Motor neuron (in vitro differentiated cells): ENCODE measurements at regions of chr5 and their contacts with region 1.

Region 1: GRCh38 chr5:113513384-113514288 is at the start of gene YTHDC2:
- ATAC-seq: peak; percentile 93 to 98 (median 96)
- H3K4me3 ChIP-seq: peak within 1 kb of the TSS; percentile 60 to 81 (median 68)
- H3K27ac ChIP-seq: peak within 1 kb of the TSS; percentile 89 to 91
- H3K4me1 ChIP-seq: peaks cover 2 to 15% of the 10 kb centered on the region in 2 donors
- total RNA-seq, gene YTHDC2: 16.8 to 46.2 (median 21.8) TPM

Region 2: DNA sequence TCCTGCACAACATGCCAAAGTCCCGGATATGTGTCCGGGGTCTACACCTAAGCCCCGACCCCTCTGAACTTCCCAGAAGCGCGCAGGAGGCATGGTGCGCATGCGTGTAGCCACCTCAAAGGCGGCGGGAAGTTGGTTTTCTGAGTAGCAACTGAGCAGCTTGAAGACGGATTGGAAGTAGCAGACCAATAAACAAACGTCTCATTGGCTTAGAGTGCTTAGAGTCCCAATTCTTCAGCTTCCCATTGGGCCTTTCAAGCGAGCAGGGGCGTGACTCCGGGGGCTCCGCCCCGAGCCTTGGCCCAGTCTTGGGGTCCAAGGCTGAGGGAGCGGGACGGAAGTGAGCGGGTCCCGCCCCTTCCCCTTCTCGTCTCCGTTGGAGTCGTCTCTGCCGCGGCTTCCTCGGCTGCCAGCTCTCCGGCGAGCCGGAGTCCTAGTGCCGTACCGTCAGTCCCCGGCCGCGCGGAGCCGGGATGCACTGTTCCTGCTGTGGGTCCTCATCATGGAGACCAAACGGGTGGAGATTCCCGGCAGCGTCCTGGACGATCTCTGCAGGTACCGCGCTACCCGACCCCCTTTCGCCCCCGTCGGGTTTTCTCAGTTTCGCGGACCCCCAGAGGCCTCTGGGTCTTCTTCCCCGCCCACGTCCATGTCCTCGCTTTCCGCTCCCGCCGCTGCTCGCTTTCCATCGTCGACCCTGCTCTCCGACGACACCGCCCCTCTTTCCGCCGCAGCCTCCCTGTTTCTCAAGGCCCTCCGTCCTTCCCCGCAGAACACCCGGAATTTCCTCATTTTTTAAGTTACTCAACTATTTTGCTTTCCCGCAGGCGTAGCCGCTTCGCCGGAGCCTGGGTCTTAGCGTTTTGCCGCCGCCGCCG is 537.0 kb before region 1 on chr5 and contains the start of gene DCP2:
- in situ Hi-C with region 1: loop called in 1 of 9 experiments (anchors 25 kb)
- ATAC-seq: peak; percentile 90 to 98 (median 98)
- H3K4me3 ChIP-seq: peak within 1 kb of the TSS; percentile 57 to 88 (median 81)
- H3K27ac ChIP-seq: peak within 1 kb of the TSS; percentile 70 to 79
- H3K4me1 ChIP-seq: peaks cover 8 to 35% of the 10 kb centered on the region in 2 donors
- total RNA-seq, gene DCP2: 19.2 to 87.5 (median 28.0) TPM

Region 3: GRCh38 chr5:113022661-113023060 is 491.0 kb before region 1 on chr5:
- in situ Hi-C with region 1: loop called in 2 of 9 experiments (anchors 25 kb)
- ATAC-seq: peak in 1 of 8 experiments; percentile 28
- H3K4me3 ChIP-seq: no peak overlapping the region
- H3K27ac ChIP-seq: no peak overlapping the region
- H3K4me1 ChIP-seq: no peaks in the 10 kb centered on the region

Region 4: GRCh38 chr5:113043491-113043931 is 470.1 kb before region 1 on chr5:
- in situ Hi-C with region 1: loop called in 1 of 9 experiments (anchors 25 kb)
- ATAC-seq: peak in 6 of 8 experiments; percentile 52 to 92 (median 80)
- H3K4me3 ChIP-seq: no peak overlapping the region
- H3K27ac ChIP-seq: no peak overlapping the region
- H3K4me1 ChIP-seq: peaks cover 9 to 13% of the 10 kb centered on the region in 2 donors

Region 5: GRCh38 chr5:113390224-113390623 is 123.4 kb before region 1 on chr5:
- in situ Hi-C with region 1: no loop called
- ATAC-seq: no peak
- H3K4me3 ChIP-seq: no peak overlapping the region
- H3K27ac ChIP-seq: no peak overlapping the region
- H3K4me1 ChIP-seq: no peaks in the 10 kb centered on the region

Region 6: GRCh38 chr5:113675166-113675565 is 161.5 kb after region 1 on chr5:
- in situ Hi-C with region 1: no loop called
- ATAC-seq: no peak
- H3K4me3 ChIP-seq: no peak overlapping the region
- H3K27ac ChIP-seq: no peak overlapping the region
- H3K4me1 ChIP-seq: peaks cover 5 to 22% of the 10 kb centered on the region in 2 donors

Region 7: GRCh38 chr5:113824307-113824706 is 310.7 kb after region 1 on chr5:
- in situ Hi-C with region 1: no loop called
- ATAC-seq: no peak
- H3K4me3 ChIP-seq: no peak overlapping the region
- H3K27ac ChIP-seq: no peak overlapping the region
- H3K4me1 ChIP-seq: no peaks in the 10 kb centered on the region